ENCODE measurements at regions of chr17 and their contacts with region 1.

Region 1: DNA sequence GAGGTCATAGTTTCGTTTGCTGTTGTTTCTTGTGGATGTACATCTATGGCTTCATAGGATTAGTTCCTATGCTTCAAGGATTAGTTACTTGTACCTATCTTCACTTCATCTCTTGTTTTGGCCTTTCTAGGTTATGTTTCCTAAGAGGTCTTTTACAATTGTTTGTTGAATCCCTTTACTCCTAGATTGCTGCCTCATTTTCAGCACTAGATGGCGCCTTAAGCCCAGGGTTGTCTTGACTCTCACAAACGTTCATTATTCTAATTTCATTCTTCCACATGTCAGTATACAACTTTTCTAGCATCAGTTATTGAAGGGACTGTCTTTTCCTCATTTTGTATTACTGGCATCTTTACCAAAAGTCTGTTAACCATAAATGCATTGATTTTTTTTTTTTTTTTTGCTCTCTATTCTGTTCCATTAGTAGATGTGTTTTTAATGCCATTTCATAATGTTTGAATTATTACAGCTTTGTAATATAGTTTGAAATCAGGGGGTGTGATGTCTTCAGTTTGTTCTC is 45.0 kb upstream of the NACA2 start:
- DNase-seq: peak; percentile 34 to 69 (median 50)
- H3K4me3 ChIP-seq: no peak overlapping the region
- H3K27ac ChIP-seq: no peak overlapping the region
- H3K4me1 ChIP-seq: no peaks in the 10 kb centered on the region
- H3K27me3 ChIP-seq: no peaks in the 10 kb centered on the region
- CTCF ChIP-seq: peak; percentile 37 to 72 (median 64)
- POLR2A ChIP-seq: no peak

Region 2: GRCh38 chr17:61731330-61731729 is 95.4 kb after region 1 on chr17:
- intact Hi-C with region 1: no loop called
- DNase-seq: no peak
- H3K4me3 ChIP-seq: no peak overlapping the region
- H3K27ac ChIP-seq: no peak overlapping the region
- H3K4me1 ChIP-seq: no peaks in the 10 kb centered on the region
- H3K27me3 ChIP-seq: no peaks in the 10 kb centered on the region
- CTCF ChIP-seq: no peak
- POLR2A ChIP-seq: no peak

Region 3: DNA sequence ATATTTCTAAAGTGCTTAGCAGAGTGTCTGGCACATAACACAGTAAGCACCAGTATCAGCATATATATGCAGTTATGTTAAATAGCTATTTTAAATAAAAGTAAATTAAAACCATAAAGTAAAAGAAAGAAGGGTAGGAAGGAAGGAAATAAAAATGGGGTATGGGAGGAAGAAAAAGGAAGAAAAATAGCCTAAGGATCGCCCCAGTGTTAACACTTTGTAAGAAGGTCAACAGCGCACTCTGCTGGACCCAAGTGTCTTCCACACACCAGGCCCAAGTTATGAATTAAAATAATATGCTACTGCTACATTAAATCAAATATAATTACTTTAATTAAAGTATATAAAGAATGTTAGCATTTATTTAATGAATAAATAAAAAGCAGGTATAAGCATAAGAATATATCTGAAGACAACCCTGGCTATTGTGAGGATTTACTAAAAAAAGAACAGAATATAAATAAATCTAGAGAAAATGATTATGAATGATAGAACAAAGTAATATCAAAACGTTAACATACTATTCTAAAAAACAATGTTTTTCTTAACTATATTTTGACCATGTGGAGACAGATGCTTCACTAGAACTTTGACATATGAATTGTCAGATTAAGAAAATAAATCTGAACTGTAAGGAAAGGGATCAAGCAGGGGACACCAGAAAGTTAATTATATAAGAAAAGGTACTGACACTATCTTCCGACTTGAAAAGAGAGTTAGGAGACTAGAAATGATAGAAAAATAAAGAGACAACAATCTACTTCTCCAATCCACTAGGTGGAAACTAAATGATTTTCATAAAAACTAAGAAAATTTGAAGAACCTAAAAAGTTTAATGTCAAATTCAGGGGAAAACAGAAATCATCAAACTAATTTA is 201.4 kb after region 1 on chr17:
- intact Hi-C with region 1: loop called (anchors 5 to 10 kb)
- DNase-seq: peak; percentile 40 to 72 (median 61)
- H3K4me3 ChIP-seq: no peak overlapping the region
- H3K27ac ChIP-seq: no peak overlapping the region
- H3K4me1 ChIP-seq: no peaks in the 10 kb centered on the region
- H3K27me3 ChIP-seq: no peaks in the 10 kb centered on the region
- CTCF ChIP-seq: peak; percentile 48 to 83 (median 66)
- POLR2A ChIP-seq: no peak

Region 4: GRCh38 chr17:61849674-61850073 is 213.7 kb after region 1 on chr17:
- intact Hi-C with region 1: loop called in 1 of 2 experiments (anchors 10 kb)
- DNase-seq: no peak
- H3K4me3 ChIP-seq: no peak overlapping the region
- H3K27ac ChIP-seq: no peak overlapping the region
- H3K4me1 ChIP-seq: no peaks in the 10 kb centered on the region
- H3K27me3 ChIP-seq: no peaks in the 10 kb centered on the region
- CTCF ChIP-seq: no peak
- POLR2A ChIP-seq: no peak

Region 5: DNA sequence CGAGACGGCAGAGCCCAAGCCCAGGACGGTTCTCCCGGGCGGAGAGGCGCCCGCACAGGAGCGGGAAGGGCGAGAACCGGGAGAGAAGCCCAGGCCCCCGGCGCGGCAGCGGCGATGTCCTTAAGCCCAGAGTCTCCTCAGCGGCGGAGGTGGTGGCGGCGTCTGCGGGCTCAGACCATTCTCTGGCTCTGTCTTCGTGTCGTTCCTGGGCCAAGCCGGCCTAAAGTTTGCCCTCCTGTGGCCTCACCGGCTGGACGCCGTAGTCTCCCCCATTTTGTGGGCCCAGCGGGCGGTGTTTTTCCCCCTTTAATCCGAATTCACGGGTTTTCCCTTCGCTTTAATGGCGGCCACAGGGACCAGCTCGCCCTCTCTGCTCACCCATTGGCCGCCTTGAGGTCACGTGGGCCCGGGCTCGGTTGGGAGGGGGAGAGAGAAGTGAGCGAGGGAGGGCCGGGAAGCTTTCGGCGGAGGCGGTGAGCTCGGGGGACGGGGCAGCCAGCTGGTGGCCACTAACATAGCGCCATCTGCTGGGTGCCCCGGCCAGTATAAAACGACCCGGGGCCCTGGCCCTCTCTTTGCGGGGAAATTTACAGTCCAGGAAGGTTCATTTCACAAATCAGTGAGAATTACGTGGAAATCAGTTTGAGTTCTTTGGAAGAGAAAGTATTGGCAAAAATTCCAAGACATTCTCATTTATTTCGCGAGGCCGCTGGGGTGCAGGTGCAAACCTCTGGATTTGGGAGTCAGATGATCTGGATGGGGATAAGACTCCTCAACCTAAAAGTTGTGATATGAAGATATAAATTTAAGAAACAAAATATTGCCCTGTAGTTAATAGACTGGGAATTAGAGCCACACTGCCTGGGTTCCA is 429.9 kb after region 1 on chr17:
- intact Hi-C with region 1: loop called in 1 of 2 experiments (anchors 10 kb)
- DNase-seq: peak; percentile 98 to 100 (median 99)
- H3K4me3 ChIP-seq: peak overlapping the region; percentile 79 to 98 (median 89)
- H3K27ac ChIP-seq: peak overlapping the region; percentile 88 to 99 (median 98)
- H3K4me1 ChIP-seq: peaks cover 16 to 23% of the 10 kb centered on the region in 2 donors
- H3K27me3 ChIP-seq: no peaks in the 10 kb centered on the region
- CTCF ChIP-seq: peak; percentile 83 to 92 (median 90)
- POLR2A ChIP-seq: peak; percentile 25 to 76

Measured in adrenal gland (tissue), 19 donors.